ENCODE measurements at regions of chr2 and their contacts with region 1.

Region 1: GRCh38 chr2:75464348-75464946 is 96.3 kb downstream of the EVA1A start:
- DNase-seq: peak; percentile 5 to 9
- H3K4me3 ChIP-seq: no peak overlapping the region
- H3K27ac ChIP-seq: no peak overlapping the region
- H3K4me1 ChIP-seq: peaks cover 0 to 4% of the 10 kb centered on the region in 2 donors
- H3K27me3 ChIP-seq: no peaks in the 10 kb centered on the region
- CTCF ChIP-seq: peak; percentile 37 to 87 (median 72)
- POLR2A ChIP-seq: no peak

Region 2: DNA sequence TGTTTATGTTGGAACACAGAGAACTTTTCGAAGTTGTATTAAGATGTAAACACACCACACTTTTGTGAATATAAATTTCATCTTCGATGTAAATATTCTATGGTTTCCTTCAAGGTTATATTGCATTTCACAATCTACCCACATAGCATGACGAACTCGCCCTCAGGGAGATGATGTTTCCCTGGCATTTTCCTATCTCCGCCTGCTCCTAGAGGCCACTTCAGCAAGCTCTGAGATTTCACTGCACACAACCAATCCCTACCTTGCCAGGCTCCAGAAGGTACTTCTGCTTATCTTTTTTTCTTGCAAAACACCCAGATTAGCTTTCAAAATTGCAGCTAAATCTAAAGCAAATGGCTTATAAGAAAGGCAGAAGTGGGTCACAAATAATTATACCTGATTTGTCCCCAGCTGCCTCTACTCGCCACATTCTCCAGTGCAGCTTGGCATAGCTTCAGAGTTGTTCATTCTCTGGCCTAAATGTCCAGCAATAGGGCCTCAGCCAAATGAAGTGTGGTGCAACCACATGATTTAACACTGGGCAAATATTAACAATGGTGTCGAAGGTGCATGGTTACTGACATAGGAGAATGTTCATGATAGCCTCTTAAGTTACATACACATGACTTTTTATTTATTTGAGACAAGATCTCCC is 149.7 kb after region 1 on chr2:
- intact Hi-C with region 1: loop called (anchors 5 kb)
- DNase-seq: no peak
- H3K4me3 ChIP-seq: no peak overlapping the region
- H3K27ac ChIP-seq: no peak overlapping the region
- H3K4me1 ChIP-seq: no peaks in the 10 kb centered on the region
- H3K27me3 ChIP-seq: no peaks in the 10 kb centered on the region
- CTCF ChIP-seq: no peak
- POLR2A ChIP-seq: no peak

Region 3: GRCh38 chr2:75627895-75628504 is 163.6 kb after region 1 on chr2:
- intact Hi-C with region 1: loop called (anchors 5 kb)
- DNase-seq: peak; percentile 83 to 86
- H3K4me3 ChIP-seq: no peak overlapping the region
- H3K27ac ChIP-seq: no peak overlapping the region
- H3K4me1 ChIP-seq: peaks cover 20 to 21% of the 10 kb centered on the region in 2 donors
- H3K27me3 ChIP-seq: no peaks in the 10 kb centered on the region
- CTCF ChIP-seq: peak; percentile 67 to 88 (median 75)
- POLR2A ChIP-seq: no peak

Measured in thyroid gland (tissue), 4 donors.